ENCODE measurements at regions of chr7 and their contacts with region 1.

Region 1: GRCh38 chr7:12623897-12624498 is 53.5 kb downstream of the SCIN start:
- DNase-seq: no peak
- H3K4me3 ChIP-seq: no peak overlapping the region
- H3K27ac ChIP-seq: no peak overlapping the region
- H3K4me1 ChIP-seq: no peaks in the 10 kb centered on the region
- H3K27me3 ChIP-seq: no peaks in the 10 kb centered on the region
- CTCF ChIP-seq: peak in 5 of 11 experiments; percentile 31 to 48 (median 34)
- POLR2A ChIP-seq: no peak

Region 2: GRCh38 chr7:12524794-12525386 is 99.1 kb before region 1 on chr7:
- intact Hi-C with region 1: loop called (anchors 10 kb)
- DNase-seq: no peak
- H3K4me3 ChIP-seq: no peak overlapping the region
- H3K27ac ChIP-seq: no peak overlapping the region
- H3K4me1 ChIP-seq: no peaks in the 10 kb centered on the region
- H3K27me3 ChIP-seq: peaks cover 0 to 13% (median 0%) of the 10 kb centered on the region in 7 donors
- CTCF ChIP-seq: peak in 10 of 11 experiments; percentile 37 to 80 (median 60)
- POLR2A ChIP-seq: no peak

Measured in spleen (tissue), 13 donors.